Left cardiac atrium (tissue), 4 donors: ENCODE measurements at regions of chr9 and their contacts with region 1.

Region 1: DNA sequence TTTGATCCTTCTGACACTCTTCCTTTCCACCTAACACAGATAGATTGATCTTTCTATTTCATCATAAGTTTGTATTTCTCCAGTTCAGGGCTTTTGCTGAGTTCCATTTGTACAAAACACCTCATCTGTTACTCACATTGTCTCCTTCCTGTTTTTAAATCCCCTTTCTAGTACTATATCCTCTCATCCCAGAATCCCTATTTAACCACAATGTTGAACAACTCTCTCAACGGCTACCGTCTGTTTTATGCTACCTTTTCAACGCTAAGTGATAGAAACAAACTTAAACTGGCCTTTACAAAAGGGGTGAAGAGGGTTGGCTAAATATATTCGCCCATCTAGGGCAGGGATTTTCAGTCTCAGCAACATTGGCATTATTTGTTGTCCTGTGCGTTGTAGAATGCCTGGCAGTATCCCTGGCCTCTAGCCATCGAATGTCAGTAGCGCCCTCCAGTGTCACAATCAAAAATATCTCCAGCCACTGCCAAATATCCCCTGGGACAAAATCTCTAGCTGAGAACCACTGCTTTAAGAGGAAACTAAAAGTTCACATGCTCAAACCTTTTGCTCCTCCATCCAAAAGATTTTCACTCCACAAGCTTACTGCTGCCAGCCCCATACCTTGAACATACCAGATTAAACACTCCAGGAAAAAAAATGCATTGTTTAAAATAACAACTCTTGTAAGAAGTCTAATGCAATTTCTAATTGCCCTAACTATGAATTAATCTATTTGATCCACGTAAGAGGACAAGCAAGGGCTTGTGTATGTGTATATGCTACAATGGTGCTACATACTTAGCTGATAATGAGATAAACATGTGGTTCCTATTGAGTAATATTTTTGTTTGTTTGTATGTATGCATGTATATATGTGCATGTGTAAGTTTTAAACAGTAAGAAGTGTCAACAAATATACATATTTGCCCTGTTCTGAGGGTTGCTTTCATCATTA is 344.0 kb downstream of the PTPRD start:
- DNase-seq: no peak
- ATAC-seq: peak; percentile 34 to 53

Region 2: DNA sequence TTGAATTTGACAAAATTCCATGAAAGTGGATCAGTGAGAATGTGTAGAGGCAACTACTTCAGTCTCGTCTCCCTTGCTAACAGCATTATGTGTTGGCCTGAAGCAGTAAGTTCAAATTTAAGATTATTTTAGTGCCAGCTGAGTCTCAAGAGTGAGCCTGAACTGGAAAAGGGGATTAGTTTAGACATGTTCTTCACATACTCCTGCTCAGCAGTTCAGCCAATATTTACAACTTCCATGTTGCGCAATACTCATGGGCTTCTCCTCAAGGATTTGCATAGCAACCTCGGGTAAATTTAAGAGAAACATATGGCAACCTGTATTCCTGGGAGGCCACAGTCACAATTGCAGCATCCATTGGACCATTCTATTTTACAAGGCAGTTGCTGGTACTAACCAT is 209.8 kb before region 1 on chr9:
- intact Hi-C with region 1: loop called in 1 of 2 experiments (anchors 2 kb)
- DNase-seq: no peak
- ATAC-seq: no peak

Region 3: DNA sequence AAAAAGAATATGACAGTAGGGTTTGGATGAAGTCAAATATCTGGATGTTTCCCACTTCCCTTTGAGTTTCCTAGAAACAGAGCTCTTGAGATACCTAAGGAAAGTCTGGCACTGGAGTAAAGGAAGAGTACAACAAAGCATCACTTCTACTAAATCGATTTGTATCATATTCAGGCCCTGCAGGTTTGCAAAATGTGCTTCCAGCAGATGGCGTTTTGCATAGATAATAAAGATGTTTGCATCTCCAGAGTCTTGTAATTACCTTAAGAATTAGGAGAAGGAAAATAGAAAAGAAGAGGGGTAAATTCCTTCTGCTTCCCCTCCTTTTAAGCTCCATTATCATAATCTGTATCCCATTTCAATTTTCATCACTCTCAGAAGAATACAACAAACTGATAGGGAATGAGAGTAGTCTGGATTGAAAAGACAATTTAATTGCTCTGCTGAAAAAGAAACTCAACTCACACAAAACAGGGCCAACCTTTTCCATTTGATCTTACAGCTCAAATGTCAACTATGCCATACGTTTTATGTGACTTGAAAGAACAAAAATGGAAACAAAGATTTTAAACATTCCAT is 36.4 kb before region 1 on chr9:
- intact Hi-C with region 1: loop called in 1 of 2 experiments (anchors 2 kb)
- DNase-seq: no peak
- ATAC-seq: no peak